ENCODE measurements at regions of chr7 and their contacts with region 1.

Region 1: GRCh38 chr7:117383826-117384225 is 43.5 kb downstream of the ASZ1 start:
- DNase-seq: no peak

Region 2: DNA sequence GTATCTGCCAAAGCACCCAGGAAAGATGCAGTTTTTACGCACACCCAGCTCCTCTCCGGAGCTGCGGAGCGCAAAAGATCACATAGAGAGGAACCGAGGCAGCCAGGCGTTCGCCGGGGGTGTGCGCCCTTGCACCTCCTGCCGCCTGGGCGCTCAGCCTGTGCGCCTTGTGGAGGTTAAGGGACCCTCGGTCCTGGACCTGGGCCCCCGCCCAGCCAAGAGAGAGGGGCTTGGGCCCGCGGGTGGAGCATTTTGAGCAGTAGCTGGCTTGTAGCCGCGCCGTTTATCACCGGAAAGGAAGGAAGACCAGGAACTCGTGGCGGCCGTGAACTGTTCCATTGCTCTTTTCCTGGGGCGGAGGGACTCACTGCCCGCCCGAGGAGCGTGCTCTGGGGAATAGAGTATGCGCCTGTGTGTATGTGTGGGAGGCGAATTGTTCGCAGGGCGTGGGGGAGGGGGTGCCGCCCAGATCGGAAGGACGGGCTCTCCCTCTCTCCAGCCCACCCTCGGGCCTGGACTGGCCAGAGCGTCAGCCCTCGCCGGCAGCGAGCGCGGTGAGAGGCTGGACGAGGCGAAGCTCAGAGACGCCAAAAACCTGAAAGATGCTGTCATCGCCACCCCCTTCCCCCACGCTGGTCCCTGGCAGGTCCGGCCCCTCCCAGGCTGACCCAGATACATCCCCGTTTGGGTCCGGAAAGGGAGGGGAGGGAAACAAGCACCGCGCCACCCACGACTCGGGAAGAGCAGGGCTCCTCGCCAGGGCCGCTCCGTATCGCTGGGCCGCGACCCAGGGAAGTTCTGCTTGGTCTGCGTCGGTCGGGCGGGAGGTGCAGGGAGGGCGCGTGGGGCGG is 59.8 kb before region 1 on chr7:
- intact Hi-C with region 1: loop called in 1 of 2 experiments (anchors 2 kb)
- DNase-seq: peak; percentile 91

Measured in posterior vena cava (tissue), 2 donors.